PC-9 (cell line): ENCODE measurements at regions of chr17 and their contacts with region 1.

Region 1: GRCh38 chr17:18225121-18225566 is 291 bp upstream of the LLGL1 start:
- DNase-seq: peak; percentile 79 to 98
- H3K4me3 ChIP-seq: peak overlapping the region; percentile 55
- H3K27ac ChIP-seq: no peak overlapping the region
- H3K4me1 ChIP-seq: peaks cover 25% of the 10 kb centered on the region
- H3K27me3 ChIP-seq: no peaks in the 10 kb centered on the region
- CTCF ChIP-seq: no peak

Region 2: GRCh38 chr17:18087610-18088491 is 137.3 kb before region 1 on chr17 and contains the start of gene DRG2:
- CTCF ChIA-PET with region 1: no interaction called
- POLR2A ChIA-PET with region 1: interaction called, 13 read pairs
- intact Hi-C with region 1: no loop called
- DNase-seq: peak; percentile 77 to 97
- H3K4me3 ChIP-seq: peak within 1 kb of the TSS; percentile 94
- H3K27ac ChIP-seq: peak within 1 kb of the TSS; percentile 38
- H3K4me1 ChIP-seq: peaks cover 10% of the 10 kb centered on the region
- H3K27me3 ChIP-seq: no peaks in the 10 kb centered on the region
- CTCF ChIP-seq: no peak; the same call in 1 of the 2 replicates
- total RNA-seq, gene DRG2: 62.4 and 66.9 TPM in 2 replicates

Region 3: GRCh38 chr17:18129041-18129502 is 96.1 kb before region 1 on chr17:
- CTCF ChIA-PET with region 1: no interaction called
- POLR2A ChIA-PET with region 1: interaction called, 20 read pairs
- intact Hi-C with region 1: no loop called
- DNase-seq: peak; percentile 62 to 69
- H3K4me3 ChIP-seq: no peak overlapping the region
- H3K27ac ChIP-seq: no peak overlapping the region
- H3K4me1 ChIP-seq: no peaks in the 10 kb centered on the region
- H3K27me3 ChIP-seq: peaks cover 11% of the 10 kb centered on the region
- CTCF ChIP-seq: no peak